ENCODE measurements at regions of chr22 and their contacts with region 1.

Region 1: DNA sequence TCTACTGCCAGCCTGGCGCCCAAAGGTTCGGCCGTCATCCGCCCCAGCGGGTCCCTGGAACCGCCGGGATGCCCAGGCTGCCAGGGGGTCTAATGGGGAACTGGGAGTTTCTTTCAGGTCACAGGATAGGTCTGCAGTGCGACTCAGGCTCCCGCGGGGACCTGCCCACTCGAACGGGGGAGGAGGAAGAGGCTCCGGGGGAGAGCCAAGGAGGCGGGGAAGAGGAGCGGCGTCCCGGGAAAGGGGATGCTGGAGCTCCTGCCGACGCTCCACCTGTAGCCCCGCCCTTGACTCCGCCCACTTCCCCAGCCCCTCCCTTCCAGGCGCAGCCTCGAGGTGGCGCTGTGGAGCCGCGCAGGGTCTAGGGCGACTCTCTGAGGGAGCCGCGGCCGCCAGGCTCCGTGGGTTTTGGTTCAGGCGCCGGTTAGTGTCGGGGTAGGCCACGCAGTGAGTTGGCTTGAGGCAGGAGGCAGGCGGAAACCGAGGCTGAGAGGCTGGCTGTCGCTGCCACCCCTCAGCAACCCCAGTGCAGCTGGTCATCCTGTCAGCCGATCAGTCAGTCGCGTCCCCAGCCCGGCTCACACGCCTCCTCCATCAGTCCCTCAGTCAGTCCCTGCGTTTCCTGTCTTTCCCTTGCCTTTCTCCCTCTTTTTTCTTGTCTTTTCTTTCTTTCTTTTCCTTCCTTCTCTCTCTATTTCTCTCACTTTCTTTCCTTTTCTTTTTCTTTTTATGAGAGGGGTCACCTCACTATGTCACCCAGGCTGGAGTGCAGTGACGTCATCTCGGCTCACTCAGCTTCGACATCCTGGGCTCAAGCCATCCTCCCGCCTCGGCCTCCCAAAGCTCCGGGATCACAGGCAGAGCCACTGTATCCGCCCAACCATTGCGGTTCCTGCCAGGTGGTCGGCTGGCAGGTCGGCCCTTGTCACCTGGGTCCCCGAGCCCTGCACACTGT is 26.4 kb downstream of the YWHAH start:
- DNase-seq: peak; percentile 79 to 94
- H3K4me3 ChIP-seq: peak overlapping the region; percentile 67
- H3K4me3 Mint-ChIP-seq: peak overlapping the region; percentile 93
- H3K27ac Mint-ChIP-seq: peak overlapping the region; percentile 81
- H3K4me1 ChIP-seq: no peaks in the 10 kb centered on the region
- H3K4me1 Mint-ChIP-seq: peaks cover 7% of the 10 kb centered on the region
- H3K27me3 ChIP-seq: no peaks in the 10 kb centered on the region
- H3K27me3 Mint-ChIP-seq: no peaks in the 10 kb centered on the region
- CTCF ChIP-seq: peak; percentile 79 to 94

Region 2: GRCh38 chr22:31630331-31631329 is 340.1 kb before region 1 on chr22:
- CTCF ChIA-PET with region 1: interaction called, 11 read pairs
- POLR2A ChIA-PET with region 1: no interaction called
- intact Hi-C with region 1: no loop called
- DNase-seq: peak; percentile 88 to 92
- H3K4me3 ChIP-seq: peak overlapping the region; percentile 60
- H3K4me3 Mint-ChIP-seq: peak overlapping the region; percentile 80
- H3K27ac Mint-ChIP-seq: peak overlapping the region; percentile 29
- H3K4me1 ChIP-seq: peaks cover 36% of the 10 kb centered on the region
- H3K4me1 Mint-ChIP-seq: peaks cover 29% of the 10 kb centered on the region
- H3K27me3 ChIP-seq: no peaks in the 10 kb centered on the region
- H3K27me3 Mint-ChIP-seq: no peaks in the 10 kb centered on the region
- CTCF ChIP-seq: no peak

Region 3: DNA sequence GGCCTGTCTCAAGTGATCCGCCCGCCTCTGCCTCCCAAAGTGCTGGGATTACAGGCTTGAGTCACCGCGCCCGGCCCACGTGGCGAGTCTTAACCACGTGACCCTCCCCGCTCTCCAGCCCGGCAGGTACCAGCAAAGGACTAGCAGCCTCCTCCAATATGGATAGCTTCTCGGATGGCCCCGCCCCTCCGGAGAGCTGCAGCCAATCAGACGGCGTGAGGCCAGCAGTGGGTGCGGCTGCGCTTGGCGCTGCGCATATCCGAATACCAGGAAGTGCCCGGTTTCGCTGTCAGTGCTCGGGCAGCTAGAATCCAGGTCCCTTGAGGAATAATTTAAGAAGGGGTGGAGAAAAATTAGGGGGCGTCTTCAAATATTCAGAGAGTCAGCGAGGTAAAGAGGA is 294.1 kb before region 1 on chr22:
- CTCF ChIA-PET with region 1: interaction called, 12 read pairs
- POLR2A ChIA-PET with region 1: no interaction called
- intact Hi-C with region 1: no loop called
- DNase-seq: peak; percentile 98
- H3K4me3 ChIP-seq: peak overlapping the region; percentile 55
- H3K4me3 Mint-ChIP-seq: peak overlapping the region; percentile 90
- H3K27ac Mint-ChIP-seq: peak overlapping the region; percentile 89
- H3K4me1 ChIP-seq: peaks cover 5% of the 10 kb centered on the region; the same call in 1 of the 2 replicates
- H3K4me1 Mint-ChIP-seq: peaks cover 11% of the 10 kb centered on the region
- H3K27me3 ChIP-seq: no peaks in the 10 kb centered on the region
- H3K27me3 Mint-ChIP-seq: no peaks in the 10 kb centered on the region
- CTCF ChIP-seq: no peak

Region 4: GRCh38 chr22:31872209-31872608 is 98.6 kb before region 1 on chr22:
- CTCF ChIA-PET with region 1: interaction called, 17 read pairs
- POLR2A ChIA-PET with region 1: no interaction called
- intact Hi-C with region 1: loop called (anchors 1 kb)
- DNase-seq: peak in 1 of 2 experiments; percentile 39
- H3K4me3 ChIP-seq: no peak overlapping the region
- H3K4me3 Mint-ChIP-seq: no peak overlapping the region
- H3K27ac Mint-ChIP-seq: no peak overlapping the region
- H3K4me1 ChIP-seq: no peaks in the 10 kb centered on the region
- H3K4me1 Mint-ChIP-seq: no peaks in the 10 kb centered on the region
- H3K27me3 ChIP-seq: no peaks in the 10 kb centered on the region
- H3K27me3 Mint-ChIP-seq: no peaks in the 10 kb centered on the region
- CTCF ChIP-seq: peak in 1 of 2 experiments; percentile 49

Region 5: DNA sequence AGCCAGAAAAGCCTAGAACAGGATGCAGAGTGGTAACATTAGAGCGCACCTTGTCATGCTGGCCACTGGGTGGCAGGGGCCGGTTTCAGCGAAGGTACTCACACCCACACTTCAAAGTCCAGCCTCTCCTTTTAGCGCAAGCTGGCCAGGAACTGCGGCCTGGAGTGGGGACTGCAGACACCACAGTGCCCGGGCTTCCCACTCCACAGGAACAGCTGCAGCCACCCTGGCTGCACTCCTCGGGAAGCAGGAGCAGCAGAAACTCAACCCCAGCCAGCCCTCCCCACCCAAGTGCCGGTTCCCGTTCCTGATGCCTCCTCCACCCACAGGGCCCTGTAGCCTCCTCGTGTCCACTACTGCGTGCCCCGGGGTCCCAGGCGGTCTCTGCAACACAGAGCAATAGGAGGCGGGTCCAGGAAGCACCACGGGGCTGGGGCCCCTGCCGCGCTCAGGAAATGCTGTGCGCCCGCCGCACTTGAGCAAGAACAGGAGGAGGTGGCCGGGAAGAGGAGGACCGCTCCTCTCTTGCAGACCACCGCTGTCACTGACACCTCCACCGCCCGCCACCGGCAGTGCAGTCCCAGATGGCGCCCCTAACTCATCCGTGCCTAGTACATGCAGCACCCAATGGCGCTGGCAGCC is 231.9 kb after region 1 on chr22:
- CTCF ChIA-PET with region 1: interaction called, 11 read pairs
- POLR2A ChIA-PET with region 1: no interaction called
- intact Hi-C with region 1: loop called (anchors 1 kb)
- DNase-seq: peak; percentile 77 to 80
- H3K4me3 ChIP-seq: 0 out of 2 replicates have a peak overlapping the region, but pooled peaks have one; percentile 3
- H3K4me3 Mint-ChIP-seq: no peak overlapping the region
- H3K27ac Mint-ChIP-seq: no peak overlapping the region
- H3K4me1 ChIP-seq: no peaks in the 10 kb centered on the region
- H3K4me1 Mint-ChIP-seq: peaks cover 10% of the 10 kb centered on the region
- H3K27me3 ChIP-seq: no peaks in the 10 kb centered on the region
- H3K27me3 Mint-ChIP-seq: no peaks in the 10 kb centered on the region
- CTCF ChIP-seq: peak; percentile 66 to 83

Region 6: GRCh38 chr22:32650553-32651345 is 680.0 kb after region 1 on chr22:
- CTCF ChIA-PET with region 1: no interaction called
- POLR2A ChIA-PET with region 1: no interaction called
- intact Hi-C with region 1: no loop called
- DNase-seq: no peak
- H3K4me3 ChIP-seq: no peak overlapping the region
- H3K4me3 Mint-ChIP-seq: no peak overlapping the region
- H3K27ac Mint-ChIP-seq: no peak overlapping the region
- H3K4me1 ChIP-seq: no peaks in the 10 kb centered on the region
- H3K4me1 Mint-ChIP-seq: no peaks in the 10 kb centered on the region
- H3K27me3 ChIP-seq: no peaks in the 10 kb centered on the region
- H3K27me3 Mint-ChIP-seq: no peaks in the 10 kb centered on the region
- CTCF ChIP-seq: no peak

Measured in Caco-2 (cell line).